Ascending aorta (tissue), 2 donors: ENCODE measurements at regions of chr17 and their contacts with region 1.

Region 1: DNA sequence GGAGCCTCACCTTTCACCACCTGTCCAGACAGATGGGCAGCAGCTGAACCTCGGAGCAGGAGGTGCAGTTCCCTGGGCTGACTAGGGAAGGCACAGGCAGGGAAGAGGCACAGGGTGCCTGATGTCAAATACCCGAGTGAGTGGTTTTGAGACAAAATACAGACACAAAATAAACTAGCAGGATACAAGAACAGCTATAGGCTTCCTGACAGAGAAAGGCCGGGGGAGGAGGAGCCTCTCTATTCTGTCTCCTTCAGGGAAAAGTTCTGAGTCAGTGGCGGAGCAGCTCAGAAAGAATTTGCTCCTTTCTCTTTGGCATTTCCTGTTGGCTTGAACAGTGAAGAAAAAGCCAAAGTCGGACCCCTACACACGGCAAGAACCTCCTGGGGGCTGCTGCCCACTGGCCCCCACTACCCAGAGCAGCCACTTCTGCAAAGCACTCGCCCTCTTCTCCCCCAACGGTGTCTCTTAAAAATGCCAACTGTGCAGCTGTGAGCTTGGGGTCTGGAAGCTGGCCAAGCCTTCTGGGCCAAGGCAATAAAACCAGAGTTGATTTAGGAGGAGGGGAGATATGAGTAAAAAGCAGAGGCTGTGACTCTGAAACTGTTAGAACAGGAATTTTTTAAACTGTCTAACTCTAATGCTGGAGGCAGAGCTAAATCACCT is 14.4 kb upstream of the FAAP100 start:
- DNase-seq: peak in 1 of 2 donors; percentile 93
- H3K4me3 ChIP-seq: peak overlapping the region; percentile 39
- H3K27ac ChIP-seq: peak overlapping the region; percentile 86 to 93
- H3K4me1 ChIP-seq: peaks cover 31 to 52% of the 10 kb centered on the region in 2 donors
- H3K27me3 ChIP-seq: no peaks in the 10 kb centered on the region
- CTCF ChIP-seq: no peak

Region 2: DNA sequence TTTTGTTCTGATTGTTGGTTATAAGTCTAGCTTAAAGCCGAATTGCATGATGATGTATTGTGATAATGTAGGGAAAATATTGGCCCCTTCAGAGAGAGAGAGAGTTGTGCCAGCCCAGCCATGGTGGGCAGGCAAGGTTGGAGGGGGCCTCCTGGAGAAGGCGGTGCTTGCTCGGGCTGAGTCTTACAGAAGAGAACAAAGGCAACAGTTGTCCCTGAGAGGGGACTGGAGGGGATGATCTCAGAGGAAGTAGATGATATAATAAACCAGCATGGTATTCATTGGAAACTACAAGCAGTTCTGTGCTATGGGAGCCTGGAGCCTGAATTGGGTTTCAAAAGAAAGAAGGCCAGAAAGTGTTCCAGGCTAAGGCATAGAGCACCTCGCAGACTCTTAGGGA is 848.2 kb before region 1 on chr17:
- intact Hi-C with region 1: no loop called
- DNase-seq: no peak
- H3K4me3 ChIP-seq: no peak overlapping the region
- H3K27ac ChIP-seq: no peak overlapping the region
- H3K4me1 ChIP-seq: no peaks in the 10 kb centered on the region
- H3K27me3 ChIP-seq: no peaks in the 10 kb centered on the region
- CTCF ChIP-seq: no peak

Region 3: DNA sequence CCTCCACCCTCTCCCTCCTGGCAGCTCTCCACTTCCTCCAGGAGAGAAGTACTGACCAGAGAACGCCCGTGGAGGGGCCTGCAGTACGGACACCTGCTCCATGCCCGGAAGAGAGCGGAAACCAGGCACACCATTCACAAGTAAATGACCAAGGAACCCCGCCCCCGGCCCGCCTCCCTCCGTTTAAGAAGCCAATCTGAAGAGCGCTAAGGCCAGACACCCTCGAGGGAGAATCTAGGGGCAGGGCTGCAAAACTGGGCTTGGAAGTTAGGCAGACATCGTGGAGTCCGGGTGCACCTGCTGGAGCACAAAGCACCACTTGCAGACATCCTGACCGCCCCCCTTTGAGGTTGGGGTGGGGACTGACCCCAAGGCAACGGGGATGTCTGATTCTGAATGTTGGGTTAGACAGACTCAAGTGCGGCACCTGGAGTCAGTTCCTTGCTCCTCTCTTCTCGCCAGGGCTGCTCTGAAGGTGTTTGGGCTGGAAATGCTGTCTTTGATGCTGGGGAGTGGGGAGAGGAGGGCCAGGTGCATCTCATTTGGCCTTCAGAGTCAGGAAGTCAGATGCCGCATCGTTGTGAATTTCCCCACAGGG is 13.5 kb before region 1 on chr17:
- intact Hi-C with region 1: loop called (anchors 1 kb)
- DNase-seq: peak; percentile 59 to 90
- H3K4me3 ChIP-seq: peak overlapping the region; percentile 81 to 83
- H3K27ac ChIP-seq: peak overlapping the region; percentile 75 to 93
- H3K4me1 ChIP-seq: peaks cover 17 to 34% of the 10 kb centered on the region in 2 donors
- H3K27me3 ChIP-seq: no peaks in the 10 kb centered on the region
- CTCF ChIP-seq: no peak

Region 4: GRCh38 chr17:81593105-81593871 is 26.7 kb after region 1 on chr17:
- intact Hi-C with region 1: loop called (anchors 1 kb)
- DNase-seq: no peak
- H3K4me3 ChIP-seq: no peak overlapping the region
- H3K27ac ChIP-seq: no peak overlapping the region
- H3K4me1 ChIP-seq: peaks cover 8 to 22% of the 10 kb centered on the region in 2 donors
- H3K27me3 ChIP-seq: no peaks in the 10 kb centered on the region
- CTCF ChIP-seq: no peak

Region 5: GRCh38 chr17:81722184-81723120 is 155.9 kb after region 1 on chr17:
- intact Hi-C with region 1: no loop called
- DNase-seq: no peak
- H3K4me3 ChIP-seq: no peak overlapping the region
- H3K27ac ChIP-seq: no peak overlapping the region
- H3K4me1 ChIP-seq: peaks cover 0 to 8% of the 10 kb centered on the region in 2 donors
- H3K27me3 ChIP-seq: no peaks in the 10 kb centered on the region
- CTCF ChIP-seq: no peak